Heart right ventricle (tissue), 16 donors: ENCODE measurements at regions of chr7 and their contacts with region 1.

Region 1: DNA sequence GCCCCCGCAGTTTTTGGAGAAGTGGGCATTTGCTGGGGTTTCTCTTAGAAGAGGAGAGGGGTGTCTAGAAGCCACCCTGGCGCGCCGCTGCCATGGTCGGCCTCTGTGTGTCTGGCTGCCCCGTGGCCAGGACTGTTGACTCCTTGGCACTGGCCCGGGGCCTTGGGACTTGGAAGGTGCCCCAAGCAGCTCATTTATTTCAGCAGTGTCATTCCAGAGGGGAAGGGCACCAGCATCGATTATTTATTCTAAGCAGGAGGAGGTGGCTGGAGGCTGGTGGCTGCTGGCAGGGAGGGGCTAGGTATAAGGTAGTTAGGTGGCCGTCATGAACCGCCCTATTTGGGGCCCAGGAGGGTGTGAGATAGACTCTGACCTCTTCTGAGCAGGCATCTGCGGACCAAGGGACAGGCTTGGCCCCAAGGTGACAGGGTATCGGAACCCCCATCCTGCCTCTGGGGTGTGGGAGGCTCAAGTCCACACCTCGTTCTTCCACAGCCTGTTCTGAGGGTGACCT is 1.6 kb downstream of the GTF2IRD1 start:
- DNase-seq: peak; percentile 29 to 60
- ATAC-seq: peak; percentile 27 to 71 (median 58)
- H3K4me3 ChIP-seq: peak overlapping the region; percentile 70 to 92 (median 78)
- H3K27ac ChIP-seq: peak overlapping the region; percentile 68 to 94 (median 90)
- H3K4me1 ChIP-seq: peaks cover 0 to 33% (median 17%) of the 10 kb centered on the region in 9 donors
- H3K27me3 ChIP-seq: peaks cover 0 to 25% (median 0%) of the 10 kb centered on the region in 7 donors
- CTCF ChIP-seq: no peak

Region 2: DNA sequence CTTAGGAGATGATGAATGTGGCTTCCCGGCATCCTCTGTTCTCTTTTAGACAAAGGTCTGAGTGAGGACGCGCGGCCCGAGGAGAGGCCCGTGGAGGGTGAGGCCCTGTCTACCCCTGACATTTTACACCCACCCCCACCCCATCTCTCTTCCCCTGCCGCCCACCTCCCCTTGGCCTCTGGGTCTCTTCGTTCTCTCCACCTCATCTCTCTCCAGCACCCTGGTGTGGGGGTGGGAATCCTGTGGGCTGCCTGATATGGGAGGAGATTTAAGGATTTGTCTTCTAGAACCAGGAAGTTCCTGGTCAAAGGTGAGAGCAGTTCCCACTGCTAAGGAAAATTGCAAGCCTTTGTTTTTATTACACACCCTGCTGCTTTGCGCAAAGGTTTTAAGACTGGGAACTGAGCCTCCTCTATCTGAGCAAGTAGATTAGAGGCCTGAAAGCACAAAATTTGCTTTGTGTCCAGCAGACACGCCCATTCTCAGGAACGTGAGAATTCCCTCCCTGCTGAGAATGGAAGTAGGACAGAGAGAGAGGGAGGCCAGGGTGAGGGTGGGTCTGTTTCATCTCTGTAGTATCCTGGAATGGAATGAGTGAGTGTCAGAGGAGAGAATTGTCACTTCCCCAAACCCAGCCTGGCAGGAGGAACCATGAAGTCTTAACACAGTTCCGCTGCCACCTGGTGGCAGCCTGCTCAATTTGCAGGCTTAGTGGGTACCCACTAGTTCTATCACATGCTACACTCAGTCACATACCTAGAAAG is 89.5 kb after region 1 on chr7:
- intact Hi-C with region 1: loop called in 1 of 10 experiments (anchors 5 kb)
- DNase-seq: no peak
- ATAC-seq: no peak
- H3K4me3 ChIP-seq: no peak overlapping the region
- H3K27ac ChIP-seq: no peak overlapping the region
- H3K4me1 ChIP-seq: peaks cover 0 to 11% (median 0%) of the 10 kb centered on the region in 9 donors
- H3K27me3 ChIP-seq: no peaks in the 10 kb centered on the region
- CTCF ChIP-seq: peak in 7 of 9 donors; percentile 18 to 52 (median 38)

Region 3: GRCh38 chr7:74725840-74726239 is 270.5 kb after region 1 on chr7:
- intact Hi-C with region 1: no loop called
- DNase-seq: no peak
- ATAC-seq: no peak
- H3K4me3 ChIP-seq: no peak overlapping the region
- H3K27ac ChIP-seq: no peak overlapping the region
- H3K4me1 ChIP-seq: peaks cover 0 to 14% (median 7%) of the 10 kb centered on the region in 9 donors
- H3K27me3 ChIP-seq: no peaks in the 10 kb centered on the region
- CTCF ChIP-seq: no peak